ENCODE measurements at regions of chr11 and their contacts with region 1.

Region 1: DNA sequence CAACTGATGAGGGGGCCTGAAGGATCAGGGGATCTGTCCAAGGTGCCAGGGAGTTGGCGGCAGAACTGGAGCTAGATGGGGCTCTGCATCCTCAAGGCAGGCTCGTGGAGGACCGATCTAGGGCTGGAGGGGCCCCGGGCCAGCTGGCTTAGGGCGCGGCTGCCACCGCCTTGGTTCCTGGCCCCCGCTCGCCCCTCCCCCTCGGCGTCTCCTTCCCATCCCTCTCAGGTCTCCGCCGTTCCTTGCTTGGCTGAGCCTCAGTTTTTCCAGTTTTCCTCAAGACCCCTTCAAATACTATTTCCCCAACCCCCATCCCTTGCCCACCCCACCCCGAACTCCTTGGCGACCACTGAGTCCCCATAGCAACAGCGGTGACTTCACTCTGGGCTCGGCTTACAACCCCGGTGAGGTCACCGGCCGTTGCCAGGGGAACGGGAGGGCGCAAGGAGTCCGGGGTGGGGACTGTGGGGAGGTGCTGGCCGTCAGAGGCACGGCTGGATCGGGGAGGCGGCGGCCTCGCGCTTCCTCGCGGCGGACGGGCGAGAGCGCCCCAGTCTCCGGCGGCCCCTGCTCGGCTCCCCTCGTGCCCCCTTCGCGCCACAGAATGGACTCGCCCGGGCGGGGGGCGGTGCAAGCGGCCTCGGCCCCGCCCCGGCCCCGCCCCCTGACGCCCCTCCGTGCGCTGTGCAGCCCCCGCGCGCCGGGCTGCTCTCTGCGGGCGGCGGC is 7.5 kb downstream of the FREY1 start:
- DNase-seq: peak; percentile 95
- H3K4me3 ChIP-seq: peak overlapping the region; percentile 75
- H3K27ac ChIP-seq: peak overlapping the region; percentile 41; the same call in 1 of the 2 replicates
- H3K4me1 ChIP-seq: no peaks in the 10 kb centered on the region
- H3K27me3 ChIP-seq: no peaks in the 10 kb centered on the region

Region 2: DNA sequence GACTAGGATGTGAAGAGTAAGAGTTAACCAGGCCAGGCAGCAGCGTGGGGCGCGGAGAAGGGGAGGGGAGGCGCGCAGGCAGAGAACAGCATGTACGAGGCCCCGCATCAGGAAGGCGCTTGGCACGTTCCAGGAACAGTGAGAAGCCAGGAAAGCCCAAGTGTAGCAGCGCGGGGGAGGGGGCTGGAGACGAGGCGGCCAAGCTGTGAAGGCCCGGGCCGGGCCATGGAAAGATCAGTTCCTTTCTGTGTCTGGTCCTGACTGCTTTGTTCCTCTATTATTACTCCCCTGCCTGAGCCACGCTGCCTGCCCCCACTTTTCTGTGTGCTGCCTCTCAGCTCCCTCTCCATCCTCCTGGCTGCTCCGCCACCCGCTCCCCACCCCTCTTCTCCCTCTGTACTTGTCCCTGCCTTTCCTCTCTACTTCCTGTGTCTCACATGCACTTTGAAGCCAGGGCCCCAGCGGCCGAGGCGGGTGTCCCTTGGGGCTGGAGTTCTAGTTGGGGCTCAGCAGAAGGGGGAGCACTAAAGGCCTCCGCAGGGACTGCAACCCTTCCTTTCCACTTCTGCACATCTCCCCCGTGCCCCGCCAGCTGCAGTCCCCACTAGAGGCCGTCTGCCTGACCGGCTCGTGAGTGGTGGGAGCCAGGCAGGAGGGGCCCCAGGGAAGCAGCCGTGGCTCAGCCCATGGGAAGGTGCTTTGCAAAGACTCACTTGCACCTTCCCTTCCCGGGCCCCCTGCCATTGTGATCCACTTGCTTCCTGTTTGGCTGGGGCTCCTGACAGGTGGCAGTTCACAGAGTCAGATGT is 689.5 kb before region 1 on chr11:
- in situ Hi-C with region 1: no loop called
- DNase-seq: peak; percentile 48
- H3K4me3 ChIP-seq: no peak overlapping the region
- H3K27ac ChIP-seq: no peak overlapping the region
- H3K4me1 ChIP-seq: peaks cover 5% of the 10 kb centered on the region; the same call in 1 of the 2 replicates
- H3K27me3 ChIP-seq: no peaks in the 10 kb centered on the region

Region 3: DNA sequence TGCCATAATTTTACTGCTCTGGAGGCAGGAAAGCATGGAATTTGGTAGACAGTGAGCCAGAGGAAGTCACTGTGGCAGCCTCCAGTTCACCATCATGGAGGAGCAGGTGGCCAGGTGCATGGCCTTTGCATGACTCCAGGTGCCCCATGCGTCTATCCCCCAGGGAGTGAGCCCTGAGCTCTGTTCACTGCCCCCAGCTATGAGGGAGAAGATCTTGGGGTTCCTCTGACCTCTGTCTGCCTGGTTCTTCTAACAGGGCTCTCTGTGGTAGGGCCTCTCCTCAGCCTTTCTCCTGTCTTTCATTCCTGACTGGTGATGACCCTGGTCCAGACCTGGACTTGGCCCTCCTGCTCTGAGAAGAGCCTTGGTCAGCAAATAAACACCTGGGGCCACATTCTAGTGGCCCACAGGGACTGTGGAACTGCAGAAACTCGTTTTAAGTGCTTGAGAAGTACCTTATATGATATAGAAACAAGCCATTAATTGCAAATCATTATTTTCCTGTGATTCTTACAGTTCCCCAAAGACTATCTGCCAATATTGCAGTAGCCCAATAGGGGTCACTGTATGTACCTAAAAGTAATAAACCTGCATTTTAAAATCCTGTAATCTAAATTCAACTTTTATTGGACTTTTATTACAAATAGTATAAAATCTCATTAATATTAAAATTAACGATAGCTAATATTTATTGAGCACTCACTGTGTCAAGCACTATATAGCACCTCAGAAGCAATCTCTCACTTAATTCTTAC is 493.5 kb before region 1 on chr11:
- in situ Hi-C with region 1: no loop called
- DNase-seq: peak; percentile 44
- H3K4me3 ChIP-seq: no peak overlapping the region
- H3K27ac ChIP-seq: no peak overlapping the region
- H3K4me1 ChIP-seq: peaks cover under 1% of the 10 kb centered on the region; the same call in 1 of the 2 replicates
- H3K27me3 ChIP-seq: peaks cover 9% of the 10 kb centered on the region; the same call in 1 of the 2 replicates

Region 4: DNA sequence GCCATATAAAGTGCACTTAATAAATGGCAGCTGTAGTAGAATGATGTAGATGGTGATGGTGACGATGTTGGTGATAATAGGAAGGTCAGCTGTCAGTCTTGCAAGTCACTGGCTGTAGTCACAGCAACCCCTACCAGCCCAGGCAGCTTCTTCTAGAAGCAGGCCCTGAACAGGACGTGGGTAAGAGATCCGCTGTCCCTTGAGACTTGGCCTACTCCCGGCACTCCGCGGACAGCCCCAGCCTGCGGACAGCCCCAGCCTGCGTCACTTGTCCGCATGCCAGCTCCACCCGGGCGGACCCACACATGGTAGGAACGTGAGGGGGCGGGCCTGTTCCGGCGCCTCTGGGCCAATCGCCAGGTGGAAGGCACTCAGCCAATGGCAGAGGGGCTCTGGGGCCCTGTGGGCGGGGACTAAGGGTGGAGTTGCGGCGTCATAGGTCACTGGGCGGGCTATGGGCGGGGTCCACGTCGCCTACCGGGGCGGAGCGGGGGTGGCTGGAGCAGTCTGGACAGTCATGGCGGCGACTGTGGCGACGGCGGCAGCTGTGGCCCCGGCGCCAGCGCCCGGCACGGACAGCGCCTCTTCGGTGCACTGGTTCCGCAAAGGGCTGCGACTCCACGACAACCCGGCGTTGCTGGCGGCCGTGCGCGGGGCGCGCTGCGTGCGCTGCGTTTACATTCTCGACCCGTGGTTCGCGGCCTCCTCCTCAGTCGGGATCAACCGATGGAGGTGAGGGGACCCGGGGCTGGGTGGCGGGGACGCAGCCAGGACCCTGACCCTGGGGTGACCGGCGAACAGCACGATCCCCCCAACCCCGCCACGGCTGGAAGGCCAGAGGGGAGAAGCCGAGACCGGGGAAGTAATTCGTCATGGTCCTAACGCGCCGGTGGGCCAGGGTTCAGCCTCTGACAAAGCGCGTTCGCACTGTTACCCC is 52.4 kb before region 1 on chr11 and contains the start of gene CRY2:
- in situ Hi-C with region 1: loop called (anchors 10 kb)
- DNase-seq: peak; percentile 98
- H3K4me3 ChIP-seq: peak within 1 kb of the TSS; percentile 91
- H3K27ac ChIP-seq: peak within 1 kb of the TSS; percentile 96
- H3K4me1 ChIP-seq: peaks cover 23% of the 10 kb centered on the region
- H3K27me3 ChIP-seq: no peaks in the 10 kb centered on the region
- total RNA-seq, gene CRY2: 10.3 and 10.7 TPM in 2 replicates

Region 5: DNA sequence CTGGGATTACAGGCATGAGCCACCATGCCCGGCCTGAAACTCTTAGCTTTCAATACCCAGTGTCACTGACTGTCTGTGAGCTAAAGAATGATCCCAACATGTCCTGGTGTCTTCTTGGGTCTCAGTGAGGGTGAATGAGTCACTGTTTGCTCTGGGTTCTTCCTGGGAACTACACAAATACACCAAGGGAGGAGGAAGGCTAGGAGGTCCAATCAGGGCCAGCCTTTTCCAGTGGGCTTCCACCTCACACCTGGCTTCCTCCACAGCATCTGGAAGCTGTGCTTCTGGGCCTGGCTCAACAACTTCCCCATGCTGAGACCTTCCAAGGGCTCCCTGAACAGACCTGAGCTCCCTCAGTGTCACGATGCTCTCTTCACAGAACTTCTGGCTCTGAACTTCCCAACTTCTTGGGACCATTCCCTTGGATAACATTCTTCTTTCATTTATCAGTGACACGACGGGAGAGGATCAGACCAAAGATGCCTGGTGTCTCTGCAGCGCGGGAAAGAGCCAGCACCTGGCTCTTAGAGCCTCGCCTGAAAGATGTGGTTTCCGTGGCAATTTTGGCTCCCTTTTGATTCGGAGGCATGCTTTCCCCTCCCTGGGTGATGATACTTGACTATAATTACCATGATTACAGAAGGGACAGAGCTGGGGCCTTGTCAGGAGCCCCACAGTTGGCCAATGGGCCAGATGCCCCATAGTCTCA is 514.3 kb after region 1 on chr11:
- in situ Hi-C with region 1: no loop called
- DNase-seq: no peak
- H3K4me3 ChIP-seq: no peak overlapping the region
- H3K27ac ChIP-seq: no peak overlapping the region
- H3K4me1 ChIP-seq: no peaks in the 10 kb centered on the region
- H3K27me3 ChIP-seq: no peaks in the 10 kb centered on the region